WTC11 (cell line): ENCODE measurements at regions of chr15 and their contacts with region 1.

Region 1: GRCh38 chr15:68277603-68278344 is at the start of gene FEM1B:
- DNase-seq: peak; percentile 84
- ATAC-seq: peak; percentile 81
- H3K4me3 Mint-ChIP-seq: peak within 1 kb of the TSS; percentile 98
- H3K27ac Mint-ChIP-seq: peak within 1 kb of the TSS; percentile 99
- H3K4me1 Mint-ChIP-seq: peaks cover 50% of the 10 kb centered on the region
- H3K27me3 Mint-ChIP-seq: no peaks in the 10 kb centered on the region
- CTCF ChIP-seq: no peak
- total RNA-seq, gene FEM1B: 59.7 to 64.8 TPM (median 62.4 TPM) in 3 replicates

Region 2: DNA sequence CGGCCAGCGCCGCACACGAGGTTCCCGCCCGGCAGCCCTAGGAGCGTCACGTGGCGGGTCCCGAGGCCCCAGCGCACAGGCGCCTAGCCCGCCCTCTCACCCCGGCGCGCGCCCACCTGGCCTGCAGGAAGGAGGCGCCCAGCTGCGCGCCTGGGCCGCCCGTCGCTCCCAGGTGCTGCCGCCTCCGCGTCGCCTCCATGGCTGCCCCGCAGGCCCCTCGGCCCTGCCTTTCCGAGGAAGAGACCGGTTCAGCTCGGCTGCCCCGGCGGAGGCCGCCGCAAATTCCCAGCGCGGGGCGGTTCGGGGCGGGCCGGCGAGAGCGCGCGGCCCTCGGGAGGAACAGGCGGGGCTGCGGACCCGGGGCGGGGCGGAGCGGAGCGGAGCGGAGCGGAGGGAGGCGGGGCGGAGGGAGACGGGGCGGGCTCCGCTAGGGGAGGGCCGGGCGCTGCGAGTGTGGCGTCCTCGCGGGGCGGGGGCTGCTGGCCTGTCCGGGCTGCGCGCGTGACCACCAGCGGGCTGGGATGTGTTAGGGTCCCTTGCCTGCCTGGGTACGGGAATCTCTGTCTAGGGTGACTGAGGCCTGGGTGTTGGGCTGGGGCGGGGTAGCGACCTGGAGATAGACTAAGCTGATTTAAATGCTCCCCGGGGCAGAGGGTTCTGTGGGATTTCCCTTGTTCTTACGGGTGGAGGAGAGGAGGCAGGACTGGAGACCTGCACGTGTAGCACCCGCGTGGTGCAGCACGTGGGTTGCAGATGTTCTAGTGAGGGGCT is 48.2 kb before region 1 on chr15 and contains the start of gene CLN6:
- CTCF ChIA-PET with region 1: no interaction called
- POLR2A ChIA-PET with region 1: interaction called, 13 read pairs
- DNase-seq: peak; percentile 84
- ATAC-seq: peak; percentile 90
- H3K4me3 Mint-ChIP-seq: peak within 1 kb of the TSS; percentile 93
- H3K27ac Mint-ChIP-seq: peak within 1 kb of the TSS; percentile 85
- H3K4me1 Mint-ChIP-seq: peaks cover 31% of the 10 kb centered on the region
- H3K27me3 Mint-ChIP-seq: peaks cover 14% of the 10 kb centered on the region
- CTCF ChIP-seq: no peak
- total RNA-seq, gene CLN6: 50.2 to 52.2 TPM (median 50.8 TPM) in 3 replicates